Adrenal gland (tissue), 19 donors: ENCODE measurements at regions of chr11 and their contacts with region 1.

Region 1: GRCh38 chr11:77039491-77040400 is 5.5 kb downstream of the B3GNT6 start:
- DNase-seq: peak in 4 of 7 donors; percentile 32 to 55 (median 42)
- H3K4me3 ChIP-seq: peak overlapping the region in 1 of 4 donors; percentile 45
- H3K27ac ChIP-seq: no peak overlapping the region
- H3K4me1 ChIP-seq: peaks cover 0 to 10% of the 10 kb centered on the region in 2 donors
- H3K27me3 ChIP-seq: peaks cover 28% of the 10 kb centered on the region
- CTCF ChIP-seq: peak in 5 of 6 experiments; percentile 18 to 45 (median 42)
- POLR2A ChIP-seq: no peak

Region 2: DNA sequence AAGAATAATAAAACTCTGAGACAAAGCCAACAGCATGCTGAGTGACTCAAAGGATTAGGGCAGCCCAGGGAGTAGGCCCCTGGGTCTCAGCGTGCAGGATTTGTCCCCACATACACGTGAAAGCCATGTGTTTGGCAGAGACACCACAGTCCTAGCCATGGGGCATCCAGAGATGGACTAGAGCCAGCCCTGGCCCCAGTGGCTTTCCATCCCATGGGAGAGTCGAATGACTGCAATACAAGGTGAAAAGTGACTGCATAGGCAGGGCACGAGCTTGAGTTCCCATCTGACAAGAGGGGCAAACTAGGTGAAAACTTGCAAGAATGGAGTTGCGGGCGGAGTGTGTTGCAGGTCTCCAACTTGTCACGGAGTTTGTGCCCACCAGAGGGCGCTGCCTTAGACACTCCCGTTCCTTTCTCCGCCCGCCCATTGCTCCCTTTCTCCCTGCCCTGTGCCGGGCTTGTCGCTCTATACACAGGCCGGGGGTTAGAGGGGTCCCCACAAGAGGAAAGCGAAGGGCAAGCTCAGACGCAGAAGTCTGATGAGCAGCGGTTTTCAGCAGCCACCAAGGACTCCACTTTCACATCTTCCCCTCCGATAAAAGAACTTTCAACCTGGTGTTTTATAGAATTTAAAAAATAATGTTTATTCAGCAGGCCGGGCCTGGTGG is 232.4 kb before region 1 on chr11:
- intact Hi-C with region 1: loop called (anchors 5 to 10 kb)
- DNase-seq: peak; percentile 79 to 94 (median 89)
- H3K4me3 ChIP-seq: no peak overlapping the region
- H3K27ac ChIP-seq: peak overlapping the region in 1 of 5 donors; percentile 0
- H3K4me1 ChIP-seq: peaks cover 0 to 4% of the 10 kb centered on the region in 2 donors
- H3K27me3 ChIP-seq: no peaks in the 10 kb centered on the region
- CTCF ChIP-seq: peak; percentile 64 to 85 (median 76)
- POLR2A ChIP-seq: no peak